HEK293T (cell line): ENCODE measurements at regions of chr6 and their contacts with region 1.

Region 1: DNA sequence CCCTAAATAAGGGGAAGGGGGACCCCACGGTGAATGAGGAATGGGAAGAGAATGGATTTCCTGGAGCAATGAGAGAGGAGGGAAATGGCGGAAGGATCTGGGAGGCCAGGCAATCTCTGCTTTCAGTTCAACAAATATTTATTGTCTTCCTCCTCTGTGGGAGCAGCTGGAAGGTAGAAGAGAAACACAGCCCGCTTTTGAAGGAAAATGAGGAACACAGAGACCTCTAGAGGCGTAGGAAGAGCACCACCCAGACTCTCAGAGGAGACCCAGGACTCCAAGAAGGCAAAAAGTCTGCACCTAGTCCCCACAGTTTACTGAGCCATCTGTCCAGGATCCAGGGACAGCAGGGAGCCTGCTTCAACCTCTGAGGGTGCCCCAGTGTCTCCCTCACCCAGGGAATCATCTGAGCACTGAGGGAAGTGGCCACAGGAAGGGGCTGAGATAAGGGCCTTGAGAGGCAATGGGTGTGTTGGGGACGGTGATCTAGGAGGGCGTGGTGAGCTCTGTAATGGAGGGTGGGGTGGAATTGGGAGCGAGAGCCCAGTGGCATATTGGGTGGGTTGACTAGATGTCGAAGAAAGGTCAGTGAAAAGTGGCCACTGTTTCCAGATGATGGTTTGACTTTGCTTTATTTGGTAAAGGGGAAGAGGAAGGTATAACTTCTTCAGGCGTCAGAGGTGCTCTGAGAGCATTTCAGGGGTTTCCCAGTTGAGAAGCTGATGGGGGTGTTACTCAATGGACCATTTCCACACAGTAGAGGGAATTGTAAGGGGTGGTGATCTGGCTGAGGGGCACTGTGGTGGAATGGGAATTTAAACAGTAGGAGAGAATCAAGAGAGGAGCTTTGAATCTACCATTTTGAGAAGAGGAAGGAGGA is 610 bp downstream of the PSORS1C1 start:
- DNase-seq: no peak

Region 2: GRCh38 chr6:30656513-30656912 is 458.7 kb before region 1 on chr6:
- CTCF ChIA-PET with region 1: no interaction called
- POLR2A ChIA-PET with region 1: no interaction called
- DNase-seq: no peak

Region 3: GRCh38 chr6:31128093-31128676 is 13.0 kb after region 1 on chr6:
- CTCF ChIA-PET with region 1: interaction called, 11 read pairs
- POLR2A ChIA-PET with region 1: no interaction called
- DNase-seq: peak; percentile 76